ENCODE measurements at regions of chr13 and their contacts with region 1.

Region 1: GRCh38 chr13:19927117-19927748 is 31.3 kb upstream of the ZMYM2 start:
- DNase-seq: peak; percentile 9
- H3K4me3 ChIP-seq: no peak overlapping the region
- H3K27me3 ChIP-seq: no peaks in the 10 kb centered on the region
- CTCF ChIP-seq: peak; percentile 50

Region 2: GRCh38 chr13:19362946-19363510 is 564.2 kb before region 1 on chr13:
- CTCF ChIA-PET with region 1: no interaction called
- POLR2A ChIA-PET with region 1: no interaction called
- DNase-seq: no peak
- H3K4me3 ChIP-seq: no peak overlapping the region
- H3K27me3 ChIP-seq: no peaks in the 10 kb centered on the region
- CTCF ChIP-seq: no peak

Region 3: GRCh38 chr13:19665427-19665859 is 261.8 kb before region 1 on chr13:
- CTCF ChIA-PET with region 1: no interaction called
- POLR2A ChIA-PET with region 1: no interaction called
- DNase-seq: no peak
- H3K4me3 ChIP-seq: no peak overlapping the region
- H3K27me3 ChIP-seq: no peaks in the 10 kb centered on the region
- CTCF ChIP-seq: no peak

Region 4: DNA sequence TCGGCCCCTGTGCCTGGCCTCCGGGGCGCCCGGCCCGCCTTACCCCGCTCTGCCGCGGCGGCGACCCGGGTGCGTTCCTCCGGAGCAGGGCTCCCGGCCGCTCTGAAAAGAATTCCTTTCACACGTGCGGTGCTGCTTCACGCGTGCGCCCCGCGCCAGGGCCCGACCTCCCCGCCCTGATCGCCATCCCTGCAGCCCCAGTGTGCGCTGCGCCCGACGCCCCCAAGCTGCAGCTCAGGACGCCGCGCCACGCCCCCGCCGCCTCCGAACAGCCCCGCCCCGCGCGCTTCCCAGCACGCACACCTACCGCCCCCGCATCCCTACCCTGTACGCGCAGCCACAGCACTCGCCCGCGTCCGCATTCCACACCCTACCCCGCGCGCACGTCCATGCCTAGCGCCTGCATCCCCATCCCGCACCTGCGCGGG is 233.6 kb after region 1 on chr13 and contains the start of gene GJA3:
- CTCF ChIA-PET with region 1: interaction called, 11 read pairs
- POLR2A ChIA-PET with region 1: no interaction called
- DNase-seq: no peak
- H3K4me3 ChIP-seq: peak within 1 kb of the TSS; percentile 40
- H3K27me3 ChIP-seq: peaks cover 3% of the 10 kb centered on the region
- CTCF ChIP-seq: no peak
- polyA plus RNA-seq, gene GJA3: 0.05 and 0.13 TPM in 2 replicates